ENCODE measurements at regions of chr4 and their contacts with region 1.

Region 1: DNA sequence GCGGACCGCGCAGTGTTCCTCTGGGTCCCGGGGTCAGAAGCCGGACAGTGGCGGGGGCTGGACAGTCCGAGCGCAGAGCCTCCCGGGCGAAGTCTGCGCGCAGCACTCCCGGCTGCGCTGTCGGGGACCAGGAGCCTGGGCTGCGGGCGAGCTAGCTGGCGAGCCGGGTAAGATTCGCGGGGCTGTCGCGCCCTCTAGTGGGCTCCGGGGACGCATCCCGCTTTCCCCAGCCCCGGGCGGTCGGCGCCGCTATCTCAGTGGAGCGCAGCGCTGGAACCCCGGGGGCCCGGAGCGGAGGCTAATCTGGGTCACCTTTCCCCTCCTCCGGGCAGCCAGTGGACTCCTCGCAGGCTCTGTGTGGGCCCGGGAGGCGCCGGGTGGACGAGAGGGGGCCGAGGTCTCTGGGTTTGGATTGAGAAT is 4.2 kb downstream of the PDGFRA start:
- DNase-seq: peak; percentile 89 to 94 (median 94)
- ATAC-seq: peak; percentile 87 to 92
- H3K4me3 ChIP-seq: peak overlapping the region; percentile 53
- H3K27ac ChIP-seq: peak overlapping the region; percentile 11
- H3K4me1 ChIP-seq: no peaks in the 10 kb centered on the region
- H3K27me3 ChIP-seq: no peaks in the 10 kb centered on the region

Region 2: GRCh38 chr4:52376132-52376704 is 1857.1 kb before region 1 on chr4:
- intact Hi-C with region 1: loop called in 1 of 4 experiments (anchors 10 kb)
- DNase-seq: no peak
- ATAC-seq: no peak
- H3K4me3 ChIP-seq: no peak overlapping the region
- H3K27ac ChIP-seq: no peak overlapping the region
- H3K4me1 ChIP-seq: no peaks in the 10 kb centered on the region
- H3K27me3 ChIP-seq: no peaks in the 10 kb centered on the region

Region 3: DNA sequence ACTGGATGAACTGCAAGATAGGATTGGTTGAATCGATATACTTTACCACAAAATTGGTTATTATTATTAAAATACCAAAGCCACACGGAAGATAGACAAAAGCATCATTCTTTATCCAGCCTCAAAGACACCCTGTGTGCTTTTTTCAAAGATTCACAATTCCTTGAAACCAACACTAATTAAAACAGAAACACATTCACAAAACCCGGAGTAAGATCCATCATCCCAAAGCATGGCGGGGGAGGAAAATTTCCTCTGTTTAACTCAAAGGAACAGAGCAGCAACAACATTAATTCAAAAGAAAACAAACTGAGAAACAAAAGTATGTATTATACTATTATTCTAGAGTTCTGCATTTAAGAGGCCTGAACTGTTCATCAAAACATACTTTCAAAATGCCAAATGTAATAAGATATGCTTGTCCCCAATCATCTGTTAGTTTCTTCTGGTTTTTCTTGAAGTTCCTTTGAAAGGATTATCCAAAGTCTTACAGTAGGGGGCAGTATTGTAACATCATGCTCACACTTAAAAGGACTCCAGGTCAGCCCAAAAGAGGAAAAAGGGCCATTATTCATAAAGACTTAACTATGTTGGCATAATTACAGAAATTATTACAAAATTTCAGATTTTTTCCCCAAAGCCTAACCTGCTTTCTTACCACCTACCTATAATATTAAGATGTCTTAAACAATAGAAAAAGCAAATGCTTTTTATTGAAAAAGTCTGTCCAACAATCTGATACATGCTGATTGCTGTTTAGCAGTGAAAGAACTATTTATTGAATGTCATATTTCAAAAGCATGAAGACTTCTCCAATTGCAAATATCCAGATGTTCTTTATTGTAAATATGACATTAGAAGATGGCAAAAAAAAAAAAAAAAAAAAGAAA is 1036.2 kb before region 1 on chr4:
- intact Hi-C with region 1: loop called (anchors 5 to 10 kb)
- DNase-seq: peak in 1 of 3 donors; percentile 9
- ATAC-seq: peak; percentile 61 to 77
- H3K4me3 ChIP-seq: no peak overlapping the region
- H3K27ac ChIP-seq: no peak overlapping the region
- H3K4me1 ChIP-seq: peaks cover 1% of the 10 kb centered on the region
- H3K27me3 ChIP-seq: no peaks in the 10 kb centered on the region

Region 4: GRCh38 chr4:53702334-53703266 is 530.7 kb before region 1 on chr4:
- intact Hi-C with region 1: loop called in 3 of 4 experiments (anchors 5 to 10 kb)
- DNase-seq: peak; percentile 90 to 96 (median 95)
- ATAC-seq: peak; percentile 97 to 98
- H3K4me3 ChIP-seq: peak overlapping the region; percentile 22
- H3K27ac ChIP-seq: peak overlapping the region; percentile 84
- H3K4me1 ChIP-seq: no peaks in the 10 kb centered on the region
- H3K27me3 ChIP-seq: no peaks in the 10 kb centered on the region

Region 5: GRCh38 chr4:54332544-54332943 is 99.3 kb after region 1 on chr4:
- intact Hi-C with region 1: no loop called
- DNase-seq: no peak
- ATAC-seq: no peak
- H3K4me3 ChIP-seq: no peak overlapping the region
- H3K27ac ChIP-seq: no peak overlapping the region
- H3K4me1 ChIP-seq: no peaks in the 10 kb centered on the region
- H3K27me3 ChIP-seq: no peaks in the 10 kb centered on the region

Region 6: DNA sequence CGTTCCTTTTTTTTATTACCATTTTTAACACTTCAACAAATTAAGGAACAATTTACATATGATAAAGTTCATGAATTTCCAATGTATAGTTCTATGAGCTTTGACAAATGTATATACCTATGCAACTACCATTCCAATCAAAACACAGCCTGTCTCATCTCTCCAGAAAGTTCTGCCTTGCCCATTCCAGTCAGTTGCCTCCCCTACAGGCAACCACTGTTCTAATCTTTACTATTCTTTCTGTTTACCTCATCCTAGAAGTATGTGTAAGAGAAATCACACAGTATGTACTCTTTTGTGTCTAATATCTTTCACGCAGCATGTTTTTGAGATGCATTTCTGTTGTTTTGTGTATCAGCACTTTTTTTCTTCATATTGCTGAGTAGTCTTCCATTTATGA is 649.3 kb after region 1 on chr4:
- intact Hi-C with region 1: no loop called
- DNase-seq: no peak
- ATAC-seq: no peak
- H3K4me3 ChIP-seq: no peak overlapping the region
- H3K27ac ChIP-seq: no peak overlapping the region
- H3K4me1 ChIP-seq: no peaks in the 10 kb centered on the region
- H3K27me3 ChIP-seq: no peaks in the 10 kb centered on the region